Cardiac septum (tissue), 1 donor: ENCODE measurements at regions of chrX and their contacts with region 1.

Region 1: DNA sequence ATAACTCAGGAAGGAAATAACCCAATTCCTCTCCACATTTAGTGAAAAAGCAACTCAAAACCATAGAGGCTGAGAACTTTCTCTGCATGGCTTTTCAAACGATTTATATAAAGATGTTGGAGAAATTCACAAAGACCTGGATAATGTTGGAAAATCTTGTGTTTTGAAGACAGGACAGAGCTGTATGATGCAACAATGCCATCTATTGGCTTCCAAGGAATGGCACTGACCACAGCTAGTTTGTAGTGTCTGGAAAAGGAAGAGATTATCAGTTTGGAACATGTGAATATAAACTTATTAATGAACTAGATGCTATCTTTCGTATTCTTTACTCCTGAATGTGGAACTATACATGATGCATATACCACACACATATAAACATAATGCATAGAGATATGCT is 503.6 kb downstream of the IL1RAPL1 start:
- DNase-seq: no peak

Region 2: DNA sequence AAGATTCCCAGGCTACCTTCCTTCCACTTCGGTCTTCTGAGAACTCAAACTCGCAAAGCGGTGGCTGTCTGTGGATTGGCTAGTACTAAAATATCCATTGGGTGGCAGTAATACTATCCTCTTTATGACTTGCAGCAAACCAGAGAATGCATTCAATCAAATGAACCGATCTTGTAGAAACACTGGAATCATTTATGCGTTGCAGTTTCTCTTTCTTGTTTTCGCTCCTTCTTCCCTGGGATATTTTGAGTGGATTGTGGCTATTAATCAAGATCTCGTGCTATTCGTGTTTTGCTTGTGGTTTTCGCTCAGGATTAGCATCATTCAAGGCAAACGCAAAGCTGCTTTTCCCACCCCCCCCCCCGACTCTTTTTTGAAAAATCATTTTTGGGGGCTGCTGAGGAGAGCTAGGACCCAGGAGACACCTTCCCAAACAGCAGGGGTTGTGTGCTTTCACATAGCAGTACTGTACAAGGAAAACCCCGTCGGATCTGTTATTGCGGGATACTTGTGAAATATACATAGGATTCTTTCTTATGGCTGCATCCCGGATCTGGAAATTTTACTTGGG is 503.7 kb before region 1 on chrX and contains the start of gene IL1RAPL1:
- intact Hi-C with region 1: loop called (anchors 5 kb)
- DNase-seq: no peak
- total RNA-seq, gene IL1RAPL1: 0.73 TPM